ENCODE measurements at regions of chr12 and their contacts with region 1.

Region 1: GRCh38 chr12:28872654-28873268 is 276.3 kb upstream of the FAR2 start:
- DNase-seq: peak; percentile 100
- ATAC-seq: peak; percentile 37
- H3K4me3 ChIP-seq: no peak overlapping the region
- H3K27ac ChIP-seq: peak overlapping the region; percentile 78
- H3K4me1 ChIP-seq: peaks cover 48% of the 10 kb centered on the region
- H3K27me3 ChIP-seq: no peaks in the 10 kb centered on the region
- CTCF ChIP-seq: no peak

Region 2: GRCh38 chr12:28023156-28023887 is 849.4 kb before region 1 on chr12:
- CTCF ChIA-PET with region 1: interaction called, 11 read pairs
- POLR2A ChIA-PET with region 1: no interaction called
- intact Hi-C with region 1: loop called (anchors 1 kb)
- DNase-seq: peak; percentile 100
- ATAC-seq: peak; percentile 72
- H3K4me3 ChIP-seq: no peak overlapping the region
- H3K27ac ChIP-seq: peak overlapping the region; percentile 79
- H3K4me1 ChIP-seq: peaks cover 73% of the 10 kb centered on the region
- H3K27me3 ChIP-seq: no peaks in the 10 kb centered on the region
- CTCF ChIP-seq: no peak

Region 3: DNA sequence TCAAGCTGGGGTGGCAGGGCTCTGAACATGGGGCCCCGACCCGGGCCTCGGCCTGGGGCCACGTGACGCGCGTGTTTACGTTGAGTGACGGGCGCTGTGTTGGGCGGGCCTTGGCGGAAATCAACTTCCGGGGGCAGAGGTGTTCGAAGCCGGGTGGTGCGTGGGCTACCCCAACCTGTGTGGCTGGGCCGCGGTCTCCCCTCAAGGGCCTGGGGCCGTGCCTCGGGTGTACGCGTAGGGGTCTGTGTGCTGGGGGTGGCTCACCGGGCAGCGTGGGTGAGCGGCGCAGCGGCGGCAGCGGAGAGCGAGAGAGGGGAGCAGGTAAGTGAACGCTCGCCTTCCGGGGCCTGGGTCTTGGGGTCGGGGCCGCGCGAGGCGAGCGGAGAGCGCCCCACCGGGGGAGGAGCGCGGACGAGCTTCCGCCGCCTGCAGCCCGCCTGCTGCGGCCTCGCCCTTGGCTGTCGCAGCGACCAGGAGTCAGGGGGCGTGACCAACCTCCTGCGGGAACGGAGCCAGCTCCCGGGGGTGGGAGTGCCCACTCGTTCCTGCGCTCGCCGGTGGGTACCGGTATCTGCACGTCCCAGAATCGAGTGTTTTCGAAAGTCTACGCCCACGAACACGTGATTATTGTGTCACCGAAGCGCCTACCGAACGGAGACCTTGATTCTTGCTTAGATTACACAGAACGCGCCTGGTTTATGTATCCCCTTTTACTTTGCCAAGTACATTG is 682.3 kb before region 1 on chr12 and contains the start of gene CCDC91:
- CTCF ChIA-PET with region 1: interaction called, 6 read pairs
- POLR2A ChIA-PET with region 1: no interaction called
- intact Hi-C with region 1: loop called (anchors 1 kb)
- DNase-seq: peak; percentile 84
- ATAC-seq: peak; percentile 78
- H3K4me3 ChIP-seq: peak within 1 kb of the TSS; percentile 76
- H3K27ac ChIP-seq: peak within 1 kb of the TSS; percentile 88
- H3K4me1 ChIP-seq: peaks cover 19% of the 10 kb centered on the region
- H3K27me3 ChIP-seq: no peaks in the 10 kb centered on the region
- CTCF ChIP-seq: no peak
- total RNA-seq, gene CCDC91: 15.7 and 22.2 TPM in 2 replicates

Region 4: GRCh38 chr12:28652239-28652638 is 220.5 kb before region 1 on chr12:
- CTCF ChIA-PET with region 1: no interaction called
- POLR2A ChIA-PET with region 1: interaction called, 12 read pairs
- intact Hi-C with region 1: loop called (anchors 2 kb)
- DNase-seq: peak; percentile 16
- ATAC-seq: no peak
- H3K4me3 ChIP-seq: peak overlapping the region; percentile 19
- H3K27ac ChIP-seq: no peak overlapping the region
- H3K4me1 ChIP-seq: peaks cover 3% of the 10 kb centered on the region; the same call in 1 of the 2 replicates
- H3K27me3 ChIP-seq: no peaks in the 10 kb centered on the region
- CTCF ChIP-seq: no peak

Region 5: DNA sequence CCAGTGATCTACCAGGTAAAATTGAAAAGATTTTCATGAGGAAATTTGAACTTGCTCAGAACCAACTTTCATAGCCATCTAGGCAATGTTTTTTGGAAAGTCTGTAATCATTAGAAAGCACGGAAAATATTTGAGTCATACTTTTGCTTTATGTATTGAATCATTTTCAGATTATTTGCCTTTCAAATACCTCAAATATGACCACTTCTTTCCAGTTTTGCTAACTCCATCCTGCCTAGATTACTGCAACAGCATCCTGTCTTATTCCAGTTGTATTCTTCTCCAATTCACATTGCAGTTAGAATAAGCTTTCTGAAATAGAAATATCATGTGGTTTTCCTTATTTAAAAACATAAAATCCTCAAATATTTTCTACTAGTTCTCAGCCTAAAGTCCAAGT is 36.5 kb after region 1 on chr12:
- CTCF ChIA-PET with region 1: interaction called, 3 read pairs
- POLR2A ChIA-PET with region 1: no interaction called
- intact Hi-C with region 1: loop called (anchors 2 kb)
- DNase-seq: peak; percentile 95
- ATAC-seq: peak; percentile 83
- H3K4me3 ChIP-seq: no peak overlapping the region
- H3K27ac ChIP-seq: peak overlapping the region; percentile 67
- H3K4me1 ChIP-seq: peaks cover 30% of the 10 kb centered on the region
- H3K27me3 ChIP-seq: no peaks in the 10 kb centered on the region
- CTCF ChIP-seq: no peak

Region 6: DNA sequence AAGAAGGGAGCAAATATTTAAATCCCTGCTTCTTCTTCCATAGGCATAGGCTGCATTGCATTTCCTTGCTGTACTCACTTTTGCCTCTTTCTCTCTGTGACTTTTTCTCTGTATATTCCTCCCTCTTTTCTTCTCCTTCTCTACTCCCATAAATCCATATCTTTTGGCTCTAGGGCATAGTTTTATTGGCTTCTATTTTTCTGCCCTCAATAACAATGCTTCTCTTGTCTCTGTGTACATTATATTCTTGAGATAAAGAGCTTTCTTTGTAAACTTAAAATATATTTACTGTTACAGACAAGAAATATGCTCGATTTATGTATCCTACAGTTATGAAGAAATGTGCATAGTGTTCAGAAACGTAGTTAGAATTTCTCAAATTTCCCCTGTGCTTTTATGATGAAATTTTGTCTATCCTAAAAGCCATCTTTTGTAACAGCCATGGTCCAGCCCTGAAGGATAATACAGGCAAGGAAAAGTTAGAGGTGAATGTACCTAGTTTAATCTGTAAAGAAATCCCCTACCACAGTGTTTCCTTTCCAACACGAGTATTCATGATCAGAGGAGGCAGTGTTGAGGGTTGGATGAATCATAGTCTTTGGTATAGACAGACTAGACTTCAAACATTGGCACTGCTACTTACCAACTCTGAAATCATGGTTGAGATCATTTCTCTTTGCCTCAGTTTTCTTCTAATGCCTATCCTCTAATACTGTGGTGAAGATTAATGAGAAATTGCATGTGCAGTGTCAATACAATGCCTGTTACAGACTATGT is 103.0 kb after region 1 on chr12:
- CTCF ChIA-PET with region 1: no interaction called
- POLR2A ChIA-PET with region 1: no interaction called
- intact Hi-C with region 1: no loop called
- DNase-seq: peak; percentile 57
- ATAC-seq: peak; percentile 89
- H3K4me3 ChIP-seq: no peak overlapping the region
- H3K27ac ChIP-seq: no peak overlapping the region
- H3K4me1 ChIP-seq: 0 out of 2 replicates have a peak, but pooled peaks cover 4% of the 10 kb centered on the region
- H3K27me3 ChIP-seq: no peaks in the 10 kb centered on the region
- CTCF ChIP-seq: peak; percentile 36; the same call in 1 of the 2 replicates

Region 7: GRCh38 chr12:29073628-29074239 is 201.0 kb after region 1 on chr12:
- CTCF ChIA-PET with region 1: interaction called, 3 read pairs
- POLR2A ChIA-PET with region 1: no interaction called
- intact Hi-C with region 1: loop called (anchors 10 kb)
- DNase-seq: peak; percentile 92
- ATAC-seq: peak; percentile 58
- H3K4me3 ChIP-seq: no peak overlapping the region
- H3K27ac ChIP-seq: peak overlapping the region; percentile 43
- H3K4me1 ChIP-seq: peaks cover 31% of the 10 kb centered on the region
- H3K27me3 ChIP-seq: no peaks in the 10 kb centered on the region
- CTCF ChIP-seq: peak; percentile 99

Measured in PC-3 (cell line).